Caco-2 (cell line): ENCODE measurements at regions of chr12 and their contacts with region 1.

Region 1: DNA sequence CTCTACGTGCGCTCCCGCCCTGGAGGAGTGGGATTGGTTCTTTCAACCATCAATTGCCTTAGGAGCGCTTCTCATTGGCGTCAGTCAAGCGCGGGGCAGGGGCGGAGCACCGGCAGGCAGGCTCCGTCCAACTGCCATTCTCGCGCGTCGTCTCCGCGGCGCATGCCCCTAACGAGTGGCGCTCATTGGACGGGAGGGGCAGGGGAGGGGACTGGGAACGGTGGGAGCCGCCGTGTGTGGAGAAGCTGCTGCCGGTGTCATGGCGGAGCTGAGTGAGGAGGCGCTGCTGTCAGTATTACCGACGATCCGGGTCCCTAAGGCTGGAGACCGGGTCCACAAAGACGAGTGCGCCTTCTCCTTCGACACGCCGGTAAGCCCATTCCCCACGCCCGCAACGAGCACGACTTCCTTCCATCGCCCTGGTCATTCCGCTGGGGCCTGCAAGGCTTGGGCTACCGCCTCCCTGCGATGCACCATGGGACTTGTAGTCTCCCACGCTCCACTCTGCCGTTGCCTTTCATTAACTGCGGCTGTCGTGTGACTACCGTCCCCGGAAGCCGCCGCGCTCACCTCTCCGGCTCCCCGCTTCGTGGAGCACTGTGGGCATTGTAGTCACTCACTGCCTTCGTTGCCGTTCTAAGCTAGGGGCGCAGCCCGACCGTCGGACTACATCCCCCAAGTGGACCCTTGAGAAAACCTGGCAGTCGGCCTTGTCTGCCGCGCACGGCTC is at the start of gene USP5:
- DNase-seq: peak; percentile 100
- H3K4me3 ChIP-seq: peak within 1 kb of the TSS; percentile 69
- H3K4me3 Mint-ChIP-seq: peak within 1 kb of the TSS; percentile 94
- H3K27ac Mint-ChIP-seq: peak within 1 kb of the TSS; percentile 95
- H3K4me1 ChIP-seq: peaks cover 13% of the 10 kb centered on the region
- H3K4me1 Mint-ChIP-seq: peaks cover 19% of the 10 kb centered on the region
- H3K27me3 ChIP-seq: no peaks in the 10 kb centered on the region
- H3K27me3 Mint-ChIP-seq: no peaks in the 10 kb centered on the region
- CTCF ChIP-seq: no peak
- total RNA-seq, gene USP5: 226 and 230 TPM in 2 replicates

Region 2: GRCh38 chr12:6662906-6663742 is 189.0 kb before region 1 on chr12 and contains the start of gene ING4:
- CTCF ChIA-PET with region 1: no interaction called
- POLR2A ChIA-PET with region 1: interaction called, 4 read pairs
- intact Hi-C with region 1: loop called (anchors 1 kb)
- DNase-seq: peak; percentile 99 to 100
- H3K4me3 ChIP-seq: peak within 1 kb of the TSS; percentile 60
- H3K4me3 Mint-ChIP-seq: peak within 1 kb of the TSS; percentile 79
- H3K27ac Mint-ChIP-seq: peak within 1 kb of the TSS; percentile 83
- H3K4me1 ChIP-seq: peaks cover 12% of the 10 kb centered on the region; the same call in 1 of the 2 replicates
- H3K4me1 Mint-ChIP-seq: peaks cover 14% of the 10 kb centered on the region
- H3K27me3 ChIP-seq: no peaks in the 10 kb centered on the region
- H3K27me3 Mint-ChIP-seq: no peaks in the 10 kb centered on the region
- CTCF ChIP-seq: peak in 1 of 2 experiments; percentile 0
- total RNA-seq, gene ING4: 31.6 and 32.8 TPM in 2 replicates

Region 3: GRCh38 chr12:6764011-6764828 is 87.9 kb before region 1 on chr12:
- CTCF ChIA-PET with region 1: interaction called, 27 read pairs
- POLR2A ChIA-PET with region 1: interaction called, 17 read pairs
- intact Hi-C with region 1: no loop called
- DNase-seq: peak; percentile 89 to 95
- H3K4me3 ChIP-seq: peak overlapping the region; percentile 10; the same call in 1 of the 2 replicates
- H3K4me3 Mint-ChIP-seq: peak overlapping the region; percentile 71
- H3K27ac Mint-ChIP-seq: peak overlapping the region; percentile 79
- H3K4me1 ChIP-seq: peaks cover 54% of the 10 kb centered on the region
- H3K4me1 Mint-ChIP-seq: peaks cover 53% of the 10 kb centered on the region
- H3K27me3 ChIP-seq: no peaks in the 10 kb centered on the region
- H3K27me3 Mint-ChIP-seq: no peaks in the 10 kb centered on the region
- CTCF ChIP-seq: no peak

Region 4: DNA sequence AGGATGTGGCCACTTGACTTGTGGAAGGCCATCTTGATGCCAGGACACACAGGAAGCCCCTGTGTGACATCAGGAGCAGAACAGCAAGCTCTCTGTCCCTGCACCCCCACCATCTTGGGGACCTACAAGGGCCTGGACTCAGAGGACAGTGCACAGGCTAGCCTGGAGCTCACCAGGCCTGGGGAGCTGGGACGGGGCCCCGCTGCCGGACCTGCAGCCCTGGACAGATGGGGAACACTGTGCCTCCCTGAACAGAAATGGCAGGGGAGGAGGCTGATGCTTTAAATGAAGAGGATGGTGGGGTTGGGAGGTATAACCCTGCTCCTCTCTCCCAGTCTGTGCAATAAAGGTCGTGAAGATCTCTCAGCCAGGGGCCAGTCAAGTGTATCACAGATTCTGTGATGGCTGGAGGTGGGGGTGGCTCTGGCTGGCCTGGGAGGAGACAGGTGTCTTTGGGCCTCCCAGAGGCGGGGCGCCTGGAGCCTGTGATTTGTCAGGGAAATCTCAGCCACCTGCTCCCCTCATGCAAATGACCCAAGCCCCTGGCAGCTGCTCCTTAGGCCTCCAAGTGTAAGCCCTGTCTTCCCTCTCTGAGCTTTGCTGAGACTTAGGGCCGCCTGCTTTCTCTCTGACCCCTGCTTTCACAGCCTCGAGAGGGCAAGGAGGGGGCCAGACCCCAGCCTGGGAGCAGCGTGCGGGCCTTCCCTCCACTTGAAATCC is 12.4 kb before region 1 on chr12:
- CTCF ChIA-PET with region 1: interaction called, 14 read pairs
- POLR2A ChIA-PET with region 1: interaction called, 28 read pairs
- intact Hi-C with region 1: loop called (anchors 1 kb)
- DNase-seq: peak in 1 of 2 experiments; percentile 59
- H3K4me3 ChIP-seq: no peak overlapping the region
- H3K4me3 Mint-ChIP-seq: no peak overlapping the region
- H3K27ac Mint-ChIP-seq: no peak overlapping the region
- H3K4me1 ChIP-seq: peaks cover 23% of the 10 kb centered on the region
- H3K4me1 Mint-ChIP-seq: peaks cover 23% of the 10 kb centered on the region
- H3K27me3 ChIP-seq: no peaks in the 10 kb centered on the region
- H3K27me3 Mint-ChIP-seq: no peaks in the 10 kb centered on the region
- CTCF ChIP-seq: no peak

Region 5: GRCh38 chr12:6873094-6874014 is 21.3 kb after region 1 on chr12 and contains the start of gene SPSB2:
- CTCF ChIA-PET with region 1: interaction called, 65 read pairs
- POLR2A ChIA-PET with region 1: interaction called, 102 read pairs
- intact Hi-C with region 1: loop called (anchors 1 kb)
- DNase-seq: peak; percentile 100
- H3K4me3 ChIP-seq: peak within 1 kb of the TSS; percentile 89
- H3K4me3 Mint-ChIP-seq: peak within 1 kb of the TSS; percentile 98
- H3K27ac Mint-ChIP-seq: peak within 1 kb of the TSS; percentile 95
- H3K4me1 ChIP-seq: peaks cover 26% of the 10 kb centered on the region
- H3K4me1 Mint-ChIP-seq: peaks cover 47% of the 10 kb centered on the region
- H3K27me3 ChIP-seq: no peaks in the 10 kb centered on the region
- H3K27me3 Mint-ChIP-seq: no peaks in the 10 kb centered on the region
- CTCF ChIP-seq: no peak
- total RNA-seq, gene SPSB2: 23.7 and 24.7 TPM in 2 replicates

Region 6: GRCh38 chr12:6937481-6938297 is 85.6 kb after region 1 on chr12:
- CTCF ChIA-PET with region 1: interaction called, 11 read pairs
- POLR2A ChIA-PET with region 1: interaction called, 8 read pairs
- intact Hi-C with region 1: no loop called
- DNase-seq: peak; percentile 97
- H3K4me3 ChIP-seq: peak overlapping the region; percentile 55
- H3K4me3 Mint-ChIP-seq: peak overlapping the region; percentile 73
- H3K27ac Mint-ChIP-seq: peak overlapping the region; percentile 92
- H3K4me1 ChIP-seq: peaks cover 10% of the 10 kb centered on the region
- H3K4me1 Mint-ChIP-seq: peaks cover 25% of the 10 kb centered on the region
- H3K27me3 ChIP-seq: no peaks in the 10 kb centered on the region
- H3K27me3 Mint-ChIP-seq: no peaks in the 10 kb centered on the region
- CTCF ChIP-seq: peak; percentile 98 to 99